Gastrocnemius medialis (tissue), 4 donors: ENCODE measurements at regions of chr19 and their contacts with region 1.

Region 1: GRCh38 chr19:43619262-43620060 is at the start of gene ZNF428:
- DNase-seq: peak; percentile 70 to 84
- ATAC-seq: peak; percentile 88 to 91
- H3K4me3 ChIP-seq: peak within 1 kb of the TSS; percentile 82 to 99 (median 90)
- H3K27ac ChIP-seq: peak within 1 kb of the TSS; percentile 90 to 96 (median 94)
- H3K4me1 ChIP-seq: peaks cover 8 to 19% of the 10 kb centered on the region in 2 donors
- H3K27me3 ChIP-seq: no peaks in the 10 kb centered on the region
- CTCF ChIP-seq: no peak
- POLR2A ChIP-seq: peak; percentile 75 to 77
- total RNA-seq, gene ZNF428: 15.4 to 26.7 (median 20.0) TPM

Region 2: GRCh38 chr19:43575156-43575950 is 44.1 kb before region 1 on chr19 and contains the starts of genes PINLYP and XRCC1:
- in situ Hi-C with region 1: no loop called
- intact Hi-C with region 1: loop called (anchors 5 kb)
- DNase-seq: peak; percentile 96 to 97
- ATAC-seq: peak; percentile 100
- H3K4me3 ChIP-seq: peak within 1 kb of the TSS; percentile 75 to 98 (median 88)
- H3K27ac ChIP-seq: peak within 1 kb of the TSS; percentile 77 to 87 (median 82)
- H3K4me1 ChIP-seq: peaks cover 10 to 13% of the 10 kb centered on the region in 2 donors
- H3K27me3 ChIP-seq: no peaks in the 10 kb centered on the region
- CTCF ChIP-seq: no peak
- POLR2A ChIP-seq: peak; percentile 43 to 44
- total RNA-seq, gene PINLYP: 1.2 TPM in 1 of 4 donors, not detected in the others
- total RNA-seq, gene XRCC1: 9.3 to 20.3 (median 16.7) TPM

Region 3: DNA sequence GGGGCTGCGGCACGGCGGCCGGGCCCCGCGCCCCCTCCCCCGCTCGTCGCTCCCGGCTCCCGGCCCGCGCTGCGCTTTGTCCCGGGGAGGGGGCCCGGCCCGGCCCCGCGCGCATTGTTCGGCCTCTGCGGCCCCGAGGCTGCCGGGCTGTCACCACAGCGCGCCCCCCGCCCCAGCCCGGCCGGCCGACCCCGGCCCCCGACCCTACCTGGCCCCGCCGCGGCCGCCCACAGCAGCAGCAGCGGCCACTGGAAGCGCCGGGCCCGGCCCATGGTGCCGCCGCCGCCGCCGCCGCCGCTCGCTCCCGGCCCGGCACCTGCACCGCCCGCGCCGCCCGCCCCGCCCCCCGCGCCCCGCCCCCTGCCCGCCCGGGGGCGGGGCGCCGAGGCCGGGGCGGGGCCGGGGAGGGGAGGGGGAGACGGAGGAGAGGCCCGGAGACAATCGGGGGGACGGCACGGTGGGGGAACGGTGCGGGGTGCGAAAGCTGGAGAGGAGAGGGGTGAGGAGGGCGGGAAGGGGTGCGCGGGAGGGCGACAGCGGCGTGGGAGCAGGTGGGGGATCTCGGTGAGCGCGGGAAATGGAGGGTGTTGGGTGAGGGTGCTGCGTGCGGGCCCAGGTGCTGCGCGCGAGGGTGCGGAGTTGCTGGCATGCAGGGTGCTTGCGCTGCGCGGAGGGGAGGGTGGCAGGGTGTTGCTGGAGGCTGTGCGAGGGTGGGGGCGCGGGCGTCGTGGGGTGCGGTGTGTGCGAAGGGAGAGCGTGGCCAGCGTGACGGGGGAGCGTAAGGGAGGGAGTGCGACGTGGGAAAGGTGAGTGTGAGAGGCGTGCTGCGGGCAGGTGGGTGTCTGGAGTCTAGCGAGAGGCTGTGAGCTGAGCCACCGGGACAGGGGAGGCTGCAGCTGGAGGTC is 20.3 kb after region 1 on chr19 and contains the start of gene CADM4:
- in situ Hi-C with region 1: no loop called
- intact Hi-C with region 1: loop called (anchors 2 kb)
- DNase-seq: no peak
- ATAC-seq: peak; percentile 79 to 87
- H3K4me3 ChIP-seq: peak within 1 kb of the TSS; percentile 65 to 75 (median 68)
- H3K27ac ChIP-seq: no peak within 1 kb of the TSS
- H3K4me1 ChIP-seq: peaks cover 0 to 9% of the 10 kb centered on the region in 2 donors
- H3K27me3 ChIP-seq: peaks cover 0 to 12% (median 4%) of the 10 kb centered on the region in 3 donors
- CTCF ChIP-seq: no peak
- POLR2A ChIP-seq: no peak
- total RNA-seq, gene CADM4: 2.6 to 4.5 (median 4.2) TPM

Region 4: GRCh38 chr19:43754503-43755255 is 135.2 kb after region 1 on chr19 and contains the start of gene SMG9:
- in situ Hi-C with region 1: no loop called
- intact Hi-C with region 1: no loop called
- DNase-seq: peak; percentile 96 to 97
- ATAC-seq: peak; percentile 93 to 94
- H3K4me3 ChIP-seq: peak within 1 kb of the TSS; percentile 75 to 82 (median 80)
- H3K27ac ChIP-seq: peak within 1 kb of the TSS; percentile 98 to 99 (median 98)
- H3K4me1 ChIP-seq: peaks cover 5 to 19% of the 10 kb centered on the region in 2 donors
- H3K27me3 ChIP-seq: no peaks in the 10 kb centered on the region
- CTCF ChIP-seq: no peak
- POLR2A ChIP-seq: peak; percentile 70 to 77
- total RNA-seq, gene SMG9: 4.5 to 9.1 (median 7.1) TPM

Region 5: GRCh38 chr19:44746946-44747738 is 1127.7 kb after region 1 on chr19:
- in situ Hi-C with region 1: no loop called
- intact Hi-C with region 1: no loop called
- DNase-seq: peak; percentile 92 to 97
- ATAC-seq: peak; percentile 86 to 88
- H3K4me3 ChIP-seq: peak overlapping the region; percentile 61 to 87 (median 72)
- H3K27ac ChIP-seq: peak overlapping the region; percentile 91 to 97 (median 95)
- H3K4me1 ChIP-seq: peaks cover 45 to 67% of the 10 kb centered on the region in 2 donors
- H3K27me3 ChIP-seq: no peaks in the 10 kb centered on the region
- CTCF ChIP-seq: no peak
- POLR2A ChIP-seq: peak; percentile 80